CD8-positive, alpha-beta T cell (primary cell): ENCODE measurements at regions of chr2 and their contacts with region 1.

Region 1: GRCh38 chr2:86808315-86809161 is 17.8 kb upstream of the CD8A start:
- DNase-seq: peak; percentile 93 to 100 (median 97)
- ATAC-seq: peak; percentile 69
- H3K4me3 ChIP-seq: peak overlapping the region; percentile 77 to 78
- H3K4me3 Mint-ChIP-seq: peak overlapping the region; percentile 98
- H3K27ac ChIP-seq: peak overlapping the region; percentile 75 to 78
- H3K27ac Mint-ChIP-seq: peak overlapping the region; percentile 99
- H3K4me1 ChIP-seq: peaks cover 51% of the 10 kb centered on the region
- H3K4me1 Mint-ChIP-seq: peaks cover 71% of the 10 kb centered on the region
- H3K27me3 ChIP-seq: no peaks in the 10 kb centered on the region
- H3K27me3 Mint-ChIP-seq: no peaks in the 10 kb centered on the region
- CTCF ChIP-seq: peak; percentile 79

Region 2: DNA sequence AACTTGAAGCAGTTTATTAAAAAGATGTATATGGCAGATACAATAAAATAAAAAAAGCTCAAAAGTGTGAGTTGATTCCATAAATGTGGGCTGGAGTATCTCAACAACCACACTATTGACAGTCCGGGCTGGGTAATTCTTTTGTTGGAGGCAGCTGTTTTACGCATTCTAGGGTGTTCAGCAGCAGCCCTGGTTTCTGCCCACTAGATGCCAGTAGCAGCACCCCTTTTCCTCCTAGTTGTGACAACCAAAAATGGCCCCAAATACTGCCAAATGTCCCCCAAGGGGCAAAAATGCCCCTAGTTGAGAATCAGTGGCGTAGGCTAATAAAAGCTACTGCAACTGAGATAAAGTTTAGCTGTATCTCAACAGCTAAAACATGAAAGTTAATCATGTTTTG is 290.1 kb before region 1 on chr2:
- CTCF ChIA-PET with region 1: interaction called, 4 read pairs
- POLR2A ChIA-PET with region 1: interaction called, 3 read pairs
- intact Hi-C with region 1: loop called in 1 of 2 experiments (anchors 1 kb)
- DNase-seq: peak; percentile 1 to 71 (median 50)
- ATAC-seq: peak; percentile 81
- H3K4me3 ChIP-seq: no peak overlapping the region
- H3K4me3 Mint-ChIP-seq: no peak overlapping the region
- H3K27ac ChIP-seq: no peak overlapping the region
- H3K27ac Mint-ChIP-seq: no peak overlapping the region
- H3K4me1 ChIP-seq: peaks cover 4% of the 10 kb centered on the region
- H3K4me1 Mint-ChIP-seq: peaks cover 10% of the 10 kb centered on the region
- H3K27me3 ChIP-seq: no peaks in the 10 kb centered on the region
- H3K27me3 Mint-ChIP-seq: no peaks in the 10 kb centered on the region
- CTCF ChIP-seq: peak; percentile 74

Region 3: DNA sequence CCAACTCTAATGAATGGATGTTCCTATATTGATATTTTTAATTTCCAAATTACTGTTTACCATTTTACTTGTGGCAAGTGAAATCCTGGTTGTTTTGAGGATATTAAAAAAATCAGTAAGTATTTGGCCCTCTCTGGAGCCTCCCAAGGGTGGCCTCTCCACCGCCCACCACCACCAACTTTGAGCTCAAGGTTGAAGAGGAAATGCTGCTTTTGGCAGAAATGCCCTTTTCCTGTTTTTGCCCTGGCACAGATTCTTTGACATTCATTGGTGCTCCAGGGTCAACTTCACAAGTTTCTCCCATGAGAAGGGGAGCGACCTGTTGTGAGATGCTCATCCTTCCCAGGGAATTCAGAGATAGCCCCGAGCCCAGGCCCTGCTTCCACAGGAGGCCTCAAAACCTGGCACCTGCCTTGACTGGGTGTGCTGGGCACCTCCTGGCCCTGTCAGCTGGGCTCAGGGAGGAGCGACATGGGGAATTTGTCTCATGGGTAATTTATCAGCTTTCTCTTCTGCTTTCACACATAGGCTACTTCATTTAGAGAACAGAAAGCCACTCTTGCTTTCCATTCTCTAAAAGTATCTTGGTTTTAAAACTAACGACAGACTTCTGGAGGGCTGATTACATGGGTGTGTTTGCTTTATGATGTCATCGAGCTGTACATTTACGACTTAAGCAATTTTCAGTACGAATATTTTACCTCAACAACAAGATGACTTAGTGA is 24.8 kb before region 1 on chr2:
- CTCF ChIA-PET with region 1: interaction called, 42 read pairs
- POLR2A ChIA-PET with region 1: interaction called, 184 read pairs
- intact Hi-C with region 1: loop called (anchors 1 kb)
- DNase-seq: peak in 4 of 9 experiments; percentile 45 to 79 (median 54)
- ATAC-seq: peak; percentile 8
- H3K4me3 ChIP-seq: no peak overlapping the region
- H3K4me3 Mint-ChIP-seq: peak overlapping the region; percentile 48
- H3K27ac ChIP-seq: peak overlapping the region; percentile 93 to 99
- H3K27ac Mint-ChIP-seq: peak overlapping the region; percentile 99
- H3K4me1 ChIP-seq: peaks cover 74% of the 10 kb centered on the region
- H3K4me1 Mint-ChIP-seq: peaks cover 74% of the 10 kb centered on the region
- H3K27me3 ChIP-seq: no peaks in the 10 kb centered on the region
- H3K27me3 Mint-ChIP-seq: no peaks in the 10 kb centered on the region
- CTCF ChIP-seq: no peak

Region 4: DNA sequence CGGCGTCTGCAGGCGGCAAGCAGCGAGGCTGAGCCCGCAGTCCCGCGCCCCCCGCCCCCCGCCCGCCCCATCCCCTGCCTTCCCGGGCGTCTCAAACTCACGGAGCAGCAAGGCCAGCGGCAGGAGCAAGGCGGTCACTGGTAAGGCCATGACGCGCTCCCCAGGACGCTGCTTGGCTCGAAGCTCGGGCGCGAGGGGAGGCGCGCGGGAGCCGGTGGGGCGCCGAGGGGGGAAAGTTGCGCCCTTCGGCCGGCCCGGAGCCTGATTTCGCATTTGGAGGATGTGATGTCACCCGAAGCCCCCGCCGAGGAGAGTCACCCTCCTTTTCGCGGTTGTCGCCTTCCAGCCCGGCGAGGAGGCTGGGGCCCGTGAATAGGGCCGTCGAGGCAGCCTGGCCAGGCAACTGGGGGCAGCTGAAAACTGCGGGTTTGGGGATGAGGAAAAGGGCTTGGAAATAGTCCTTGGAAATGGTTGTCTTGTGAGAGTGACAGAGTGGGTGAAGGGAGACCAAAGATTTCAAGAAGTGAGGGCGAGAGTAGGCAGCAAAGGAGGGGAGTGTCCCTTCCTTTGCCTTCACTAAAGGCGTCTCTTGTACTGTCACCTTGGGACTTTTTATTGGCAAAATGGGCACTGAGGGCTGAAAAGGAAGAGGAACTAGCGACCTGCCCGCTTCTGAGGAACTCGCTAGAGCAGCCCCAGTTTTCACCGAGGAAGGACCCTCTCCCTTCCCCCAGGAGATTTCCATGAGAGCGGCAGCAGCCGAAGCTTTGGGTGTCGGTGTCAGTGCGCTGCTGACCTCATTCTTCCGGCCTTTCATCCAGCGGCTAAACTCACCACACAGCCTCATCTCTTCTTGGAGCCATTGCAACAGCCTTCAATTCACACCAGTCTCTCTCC is 17.6 kb before region 1 on chr2 and contains the start of gene CD8A:
- CTCF ChIA-PET with region 1: interaction called, 105 read pairs
- POLR2A ChIA-PET with region 1: interaction called, 184 read pairs
- intact Hi-C with region 1: loop called (anchors 1 kb)
- DNase-seq: peak; percentile 60 to 93 (median 82)
- ATAC-seq: peak; percentile 23
- H3K4me3 ChIP-seq: peak within 1 kb of the TSS; percentile 93 to 98
- H3K4me3 Mint-ChIP-seq: peak within 1 kb of the TSS; percentile 95
- H3K27ac ChIP-seq: peak within 1 kb of the TSS; percentile 95 to 99
- H3K27ac Mint-ChIP-seq: peak within 1 kb of the TSS; percentile 99
- H3K4me1 ChIP-seq: peaks cover 69% of the 10 kb centered on the region
- H3K4me1 Mint-ChIP-seq: peaks cover 73% of the 10 kb centered on the region
- H3K27me3 ChIP-seq: no peaks in the 10 kb centered on the region
- H3K27me3 Mint-ChIP-seq: no peaks in the 10 kb centered on the region
- CTCF ChIP-seq: no peak
- total RNA-seq, gene CD8A: 502 to 503 TPM

Region 5: GRCh38 chr2:86825693-86826381 is 17.3 kb after region 1 on chr2:
- CTCF ChIA-PET with region 1: interaction called, 81 read pairs
- POLR2A ChIA-PET with region 1: interaction called, 198 read pairs
- intact Hi-C with region 1: loop called (anchors 1 kb)
- DNase-seq: peak; percentile 70 to 96 (median 82)
- ATAC-seq: peak; percentile 84
- H3K4me3 ChIP-seq: peak overlapping the region; percentile 85 to 88
- H3K4me3 Mint-ChIP-seq: peak overlapping the region; percentile 90
- H3K27ac ChIP-seq: peak overlapping the region; percentile 81 to 91
- H3K27ac Mint-ChIP-seq: peak overlapping the region; percentile 99
- H3K4me1 ChIP-seq: peaks cover 76% of the 10 kb centered on the region
- H3K4me1 Mint-ChIP-seq: peaks cover 77% of the 10 kb centered on the region
- H3K27me3 ChIP-seq: no peaks in the 10 kb centered on the region
- H3K27me3 Mint-ChIP-seq: no peaks in the 10 kb centered on the region
- CTCF ChIP-seq: no peak

Region 6: GRCh38 chr2:86831537-86831936 is 23.0 kb after region 1 on chr2:
- CTCF ChIA-PET with region 1: interaction called, 81 read pairs
- POLR2A ChIA-PET with region 1: interaction called, 198 read pairs
- intact Hi-C with region 1: loop called (anchors 1 kb)
- DNase-seq: no peak
- ATAC-seq: no peak
- H3K4me3 ChIP-seq: peak overlapping the region in 1 of 2 experiments; percentile 23
- H3K4me3 Mint-ChIP-seq: peak overlapping the region; percentile 76
- H3K27ac ChIP-seq: peak overlapping the region; percentile 22 to 40
- H3K27ac Mint-ChIP-seq: peak overlapping the region; percentile 98
- H3K4me1 ChIP-seq: peaks cover 92% of the 10 kb centered on the region
- H3K4me1 Mint-ChIP-seq: peaks cover 80% of the 10 kb centered on the region
- H3K27me3 ChIP-seq: no peaks in the 10 kb centered on the region
- H3K27me3 Mint-ChIP-seq: no peaks in the 10 kb centered on the region
- CTCF ChIP-seq: no peak